CD8-positive, alpha-beta memory T cell (primary cell): ENCODE measurements at regions of chr14 and their contacts with region 1.

Region 1: DNA sequence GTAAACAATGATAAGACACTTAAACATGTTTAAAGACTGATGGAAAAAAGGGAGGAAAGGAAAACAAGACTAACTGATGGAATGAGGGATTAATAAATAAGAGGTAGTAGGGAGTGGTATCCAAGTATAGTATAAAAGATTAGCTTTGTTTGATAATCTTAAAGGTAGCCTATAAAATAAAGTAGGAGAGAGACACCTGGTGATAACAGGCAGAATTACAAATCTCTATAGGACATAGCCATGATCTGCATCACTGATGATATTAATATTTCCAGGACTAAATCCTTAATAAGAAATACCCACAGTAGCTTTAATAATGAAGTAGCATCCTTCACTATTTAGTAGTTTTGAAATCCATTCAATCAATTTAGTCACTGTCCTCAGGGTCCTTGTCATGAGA is 30.4 kb downstream of the DLGAP5 start:
- DNase-seq: peak in 2 of 5 donors; percentile 32 to 35
- H3K4me3 ChIP-seq: no peak overlapping the region
- H3K4me3 Mint-ChIP-seq: no peak overlapping the region
- H3K27ac ChIP-seq: no peak overlapping the region
- H3K27ac Mint-ChIP-seq: peak overlapping the region in 2 of 8 donors; percentile 2 to 33
- H3K4me1 ChIP-seq: no peaks in the 10 kb centered on the region
- H3K4me1 Mint-ChIP-seq: peaks cover 7 to 39% (median 21%) of the 10 kb centered on the region in 3 donors
- H3K27me3 ChIP-seq: no peaks in the 10 kb centered on the region
- H3K27me3 Mint-ChIP-seq: no peaks in the 10 kb centered on the region

Region 2: DNA sequence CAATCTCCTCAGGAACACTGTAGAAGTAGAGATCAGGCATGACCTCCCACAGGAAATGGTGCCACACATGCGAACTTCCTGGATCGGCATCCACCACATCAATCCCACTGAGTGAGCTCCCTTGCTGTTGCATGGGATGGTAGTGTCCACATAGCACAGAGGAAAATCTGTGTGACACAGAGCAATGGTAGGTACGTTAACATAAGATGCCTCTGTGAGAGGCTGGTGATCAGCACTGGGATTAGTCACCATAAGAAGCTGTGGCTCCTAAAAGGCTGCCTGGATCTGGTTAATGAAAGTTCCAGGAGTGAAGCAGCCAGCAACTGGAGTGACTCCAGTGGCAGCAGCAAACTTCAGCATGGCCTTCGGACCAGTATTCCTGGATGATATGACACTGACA is 155.9 kb before region 1 on chr14:
- CTCF ChIA-PET with region 1: no interaction called
- POLR2A ChIA-PET with region 1: no interaction called
- DNase-seq: no peak
- H3K4me3 ChIP-seq: no peak overlapping the region
- H3K4me3 Mint-ChIP-seq: no peak overlapping the region
- H3K27ac ChIP-seq: no peak overlapping the region
- H3K27ac Mint-ChIP-seq: peak overlapping the region in 2 of 8 donors; percentile 18 to 79
- H3K4me1 ChIP-seq: no peaks in the 10 kb centered on the region
- H3K4me1 Mint-ChIP-seq: peaks cover 0 to 8% (median 4%) of the 10 kb centered on the region in 3 donors
- H3K27me3 ChIP-seq: no peaks in the 10 kb centered on the region
- H3K27me3 Mint-ChIP-seq: no peaks in the 10 kb centered on the region

Region 3: DNA sequence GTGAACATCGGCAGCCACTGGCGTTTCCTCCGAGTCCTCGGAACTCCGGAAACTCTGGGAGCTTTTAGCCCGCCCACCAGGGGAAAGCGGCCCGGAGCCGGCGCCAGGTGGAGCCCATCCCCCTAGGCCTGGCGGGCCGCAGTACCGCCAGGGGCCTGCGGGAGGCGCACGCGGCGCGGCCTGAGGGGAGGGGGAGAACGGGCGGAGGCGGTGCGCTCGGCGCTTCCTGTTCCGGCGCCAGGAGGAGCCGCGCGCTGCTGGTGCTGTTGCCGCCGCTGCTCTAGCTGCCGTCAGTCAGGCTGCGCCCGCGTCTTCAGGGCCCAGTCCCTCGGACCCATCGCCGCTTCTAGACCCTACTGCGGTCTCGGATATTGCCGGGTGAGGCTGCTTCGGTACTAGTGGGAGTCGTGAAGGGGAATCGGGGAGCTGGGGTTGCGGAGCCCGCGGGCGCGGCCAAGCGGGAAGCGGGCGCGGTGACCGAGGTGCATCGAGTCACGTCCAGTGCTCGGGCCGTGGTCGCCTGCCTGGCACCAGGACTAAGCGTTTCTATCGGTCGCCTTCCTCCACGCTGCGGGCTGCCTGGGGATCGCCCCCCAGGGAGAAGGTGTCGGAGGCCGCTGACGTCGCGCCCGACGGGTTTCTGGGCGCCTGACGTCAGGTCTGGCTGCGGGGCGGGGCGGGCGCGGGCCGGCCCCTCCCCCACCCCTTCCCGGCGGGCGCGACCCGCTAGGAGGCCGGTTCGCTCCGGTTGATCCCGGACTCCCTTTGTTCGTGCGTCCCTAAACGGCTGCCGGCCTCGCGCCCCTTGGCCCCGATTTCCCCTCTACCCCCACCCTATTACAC is 109.3 kb before region 1 on chr14 and contains the start of gene MAPK1IP1L:
- CTCF ChIA-PET with region 1: interaction called, 11 read pairs
- POLR2A ChIA-PET with region 1: no interaction called
- DNase-seq: peak; percentile 84 to 92 (median 90)
- H3K4me3 ChIP-seq: peak within 1 kb of the TSS; percentile 94
- H3K4me3 Mint-ChIP-seq: peak within 1 kb of the TSS; percentile 83 to 95 (median 92)
- H3K27ac ChIP-seq: peak within 1 kb of the TSS; percentile 100
- H3K27ac Mint-ChIP-seq: peak within 1 kb of the TSS; percentile 93 to 100 (median 99)
- H3K4me1 ChIP-seq: peaks cover 33% of the 10 kb centered on the region
- H3K4me1 Mint-ChIP-seq: peaks cover 44 to 54% (median 51%) of the 10 kb centered on the region in 3 donors
- H3K27me3 ChIP-seq: no peaks in the 10 kb centered on the region
- H3K27me3 Mint-ChIP-seq: peaks cover 0 to 1% of the 10 kb centered on the region in 2 donors
- total RNA-seq, gene MAPK1IP1L: 104 to 106 TPM

Region 4: GRCh38 chr14:55094321-55095157 is 66.5 kb before region 1 on chr14:
- CTCF ChIA-PET with region 1: interaction called, 143 read pairs
- POLR2A ChIA-PET with region 1: interaction called, 10 read pairs
- DNase-seq: no peak
- H3K4me3 ChIP-seq: no peak overlapping the region
- H3K4me3 Mint-ChIP-seq: no peak overlapping the region
- H3K27ac ChIP-seq: no peak overlapping the region
- H3K27ac Mint-ChIP-seq: peak overlapping the region in 1 of 8 donors; percentile 19
- H3K4me1 ChIP-seq: peaks cover 12% of the 10 kb centered on the region
- H3K4me1 Mint-ChIP-seq: peaks cover 21 to 37% (median 24%) of the 10 kb centered on the region in 3 donors
- H3K27me3 ChIP-seq: no peaks in the 10 kb centered on the region
- H3K27me3 Mint-ChIP-seq: no peaks in the 10 kb centered on the region

Region 5: GRCh38 chr14:55129428-55130195 is 31.4 kb before region 1 on chr14:
- CTCF ChIA-PET with region 1: interaction called, 24 read pairs
- POLR2A ChIA-PET with region 1: interaction called, 5 read pairs
- DNase-seq: peak; percentile 18 to 77 (median 50)
- H3K4me3 ChIP-seq: peak overlapping the region; percentile 51
- H3K4me3 Mint-ChIP-seq: peak overlapping the region; percentile 80 to 91 (median 85)
- H3K27ac ChIP-seq: no peak overlapping the region
- H3K27ac Mint-ChIP-seq: peak overlapping the region; percentile 53 to 90 (median 76)
- H3K4me1 ChIP-seq: peaks cover 18% of the 10 kb centered on the region
- H3K4me1 Mint-ChIP-seq: peaks cover 38 to 51% (median 41%) of the 10 kb centered on the region in 3 donors
- H3K27me3 ChIP-seq: no peaks in the 10 kb centered on the region
- H3K27me3 Mint-ChIP-seq: no peaks in the 10 kb centered on the region

Region 6: DNA sequence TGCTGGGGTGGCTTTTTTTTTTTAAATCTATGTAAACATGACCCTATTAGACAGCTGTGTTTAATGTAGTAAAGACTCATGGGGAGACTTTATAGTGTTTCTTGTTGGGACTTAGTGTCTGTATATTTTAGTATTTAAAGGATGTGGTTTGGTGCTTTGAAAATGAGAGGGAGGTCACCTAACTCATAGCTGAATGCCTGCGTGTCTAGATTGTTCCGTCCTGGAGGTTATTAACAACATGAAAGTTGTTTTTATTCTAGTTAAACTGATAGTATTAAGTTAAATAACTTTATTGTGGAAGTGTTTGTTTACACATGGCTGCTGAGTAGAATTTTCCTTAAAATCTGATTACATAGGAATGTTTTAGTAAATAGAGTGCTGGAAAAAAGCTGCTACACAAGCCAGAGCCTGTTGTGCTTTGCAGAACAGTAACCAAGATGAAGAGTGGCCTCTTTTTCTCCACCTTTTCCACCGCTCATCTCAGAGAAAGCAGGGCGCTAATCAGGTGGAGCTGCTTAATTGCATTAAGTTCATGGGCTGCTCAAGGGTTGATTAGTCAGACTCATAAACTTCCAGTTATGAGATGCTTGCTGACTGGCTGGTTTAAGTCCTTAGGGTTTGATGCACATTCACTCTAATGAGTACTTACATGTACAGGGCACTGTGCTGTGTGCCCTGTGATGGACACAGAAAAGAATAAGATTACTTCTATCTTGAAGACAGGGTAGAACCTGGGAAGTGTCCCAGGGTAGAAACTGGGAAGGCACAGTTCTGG is 172.9 kb after region 1 on chr14:
- CTCF ChIA-PET with region 1: no interaction called
- POLR2A ChIA-PET with region 1: interaction called, 10 read pairs
- DNase-seq: no peak
- H3K4me3 ChIP-seq: peak overlapping the region; percentile 33
- H3K4me3 Mint-ChIP-seq: peak overlapping the region; percentile 68 to 90 (median 88)
- H3K27ac ChIP-seq: peak overlapping the region; percentile 66
- H3K27ac Mint-ChIP-seq: peak overlapping the region; percentile 88 to 99 (median 96)
- H3K4me1 ChIP-seq: peaks cover 70% of the 10 kb centered on the region
- H3K4me1 Mint-ChIP-seq: peaks cover 82 to 94% (median 90%) of the 10 kb centered on the region in 3 donors
- H3K27me3 ChIP-seq: no peaks in the 10 kb centered on the region
- H3K27me3 Mint-ChIP-seq: peaks cover 0 to 2% of the 10 kb centered on the region in 2 donors

Region 7: DNA sequence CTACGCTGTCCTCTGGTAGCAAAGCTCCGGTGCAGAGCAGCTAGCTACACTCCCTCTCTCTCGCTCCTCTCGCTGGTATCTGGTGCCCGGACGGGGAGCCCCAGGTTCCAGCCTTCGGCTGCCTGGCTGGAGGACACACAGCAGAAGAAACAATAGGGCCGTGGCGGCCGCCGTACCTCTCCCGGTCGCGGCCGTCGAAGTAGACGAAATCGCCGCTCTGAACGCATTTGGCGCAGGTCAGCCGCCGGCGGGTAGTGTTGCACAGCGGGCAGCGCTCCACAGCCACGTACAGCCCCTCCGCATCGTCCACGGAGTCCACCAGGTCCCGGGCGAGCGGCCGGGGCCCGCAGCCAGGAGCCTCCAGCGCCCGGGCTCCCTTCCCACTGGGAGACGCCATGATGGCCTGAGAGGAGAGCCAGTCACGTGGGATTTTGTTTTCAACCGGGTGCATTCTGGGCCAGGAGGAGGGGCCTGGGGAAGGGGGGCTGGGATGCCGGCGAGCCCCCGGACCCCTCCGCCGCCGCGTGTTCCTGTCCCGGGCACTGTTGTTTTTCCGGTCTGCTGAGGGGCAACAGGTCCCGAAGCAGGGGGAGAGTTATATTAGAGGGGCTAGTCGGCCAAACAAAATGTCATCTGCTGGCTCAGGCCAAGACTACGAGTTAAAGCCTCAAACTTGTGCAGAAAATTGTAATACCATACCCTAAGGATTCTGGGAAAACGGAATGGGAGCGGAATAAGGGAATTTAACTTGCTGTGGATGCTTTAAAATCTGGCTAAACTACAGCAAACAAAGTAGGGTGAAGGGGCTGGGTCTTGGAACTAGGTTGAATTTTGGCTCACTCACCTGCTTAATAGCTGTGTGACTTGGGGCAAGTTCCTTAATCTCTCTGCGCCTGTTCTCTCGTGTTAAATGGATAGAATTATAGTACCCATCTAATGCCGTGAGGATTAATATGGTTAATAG is 250.7 kb after region 1 on chr14 and contains the start of gene ATG14:
- CTCF ChIA-PET with region 1: no interaction called
- POLR2A ChIA-PET with region 1: no interaction called
- DNase-seq: peak; percentile 60 to 81 (median 67)
- H3K4me3 ChIP-seq: peak within 1 kb of the TSS; percentile 82
- H3K4me3 Mint-ChIP-seq: peak within 1 kb of the TSS; percentile 77 to 96 (median 89)
- H3K27ac ChIP-seq: peak within 1 kb of the TSS; percentile 66
- H3K27ac Mint-ChIP-seq: peak within 1 kb of the TSS; percentile 38 to 95 (median 86)
- H3K4me1 ChIP-seq: peaks cover 22% of the 10 kb centered on the region
- H3K4me1 Mint-ChIP-seq: peaks cover 38 to 52% (median 41%) of the 10 kb centered on the region in 3 donors
- H3K27me3 ChIP-seq: no peaks in the 10 kb centered on the region
- H3K27me3 Mint-ChIP-seq: peaks cover 9 to 11% of the 10 kb centered on the region in 2 donors
- total RNA-seq, gene ATG14: 7.7 to 8.2 TPM

Region 8: DNA sequence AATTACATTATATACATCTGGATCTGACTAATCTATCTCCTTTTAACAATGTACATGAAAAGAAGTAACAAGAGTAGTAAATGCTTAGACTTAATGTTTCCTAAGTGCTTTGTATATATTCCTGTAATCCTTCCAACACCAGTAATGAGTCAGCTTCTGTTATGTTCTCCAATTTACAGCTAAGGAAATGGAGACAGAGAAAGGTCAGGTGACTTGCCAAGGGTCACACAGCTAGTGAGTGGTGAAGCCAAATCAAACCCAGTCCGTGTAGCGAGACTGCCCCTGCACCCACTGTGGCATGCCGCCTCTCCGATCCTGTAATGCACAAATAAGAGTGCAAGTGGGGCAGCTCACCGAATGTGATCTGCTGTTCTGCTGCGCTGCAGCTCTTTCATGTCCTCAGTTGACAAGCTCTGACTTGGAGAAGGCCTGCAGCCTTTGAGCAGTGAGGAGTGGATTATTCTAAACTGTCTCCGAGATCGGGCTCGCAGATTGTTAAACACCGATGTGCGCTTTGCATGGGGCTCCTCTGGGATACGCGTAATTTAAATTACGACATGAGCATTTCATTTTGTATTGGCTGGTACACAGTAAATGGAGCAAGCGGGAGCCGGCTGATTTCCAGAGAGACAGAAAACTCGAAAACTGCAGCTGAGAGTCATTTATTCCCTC is 354.0 kb after region 1 on chr14:
- CTCF ChIA-PET with region 1: no interaction called
- POLR2A ChIA-PET with region 1: no interaction called
- DNase-seq: no peak
- H3K4me3 ChIP-seq: no peak overlapping the region
- H3K4me3 Mint-ChIP-seq: no peak overlapping the region
- H3K27ac ChIP-seq: no peak overlapping the region
- H3K27ac Mint-ChIP-seq: peak overlapping the region in 1 of 8 donors; percentile 50
- H3K4me1 ChIP-seq: no peaks in the 10 kb centered on the region
- H3K4me1 Mint-ChIP-seq: no peaks in the 10 kb centered on the region
- H3K27me3 ChIP-seq: no peaks in the 10 kb centered on the region
- H3K27me3 Mint-ChIP-seq: peaks cover 0 to 3% of the 10 kb centered on the region in 2 donors